ENCODE measurements at regions of chr9 and their contacts with region 1.

Region 1: DNA sequence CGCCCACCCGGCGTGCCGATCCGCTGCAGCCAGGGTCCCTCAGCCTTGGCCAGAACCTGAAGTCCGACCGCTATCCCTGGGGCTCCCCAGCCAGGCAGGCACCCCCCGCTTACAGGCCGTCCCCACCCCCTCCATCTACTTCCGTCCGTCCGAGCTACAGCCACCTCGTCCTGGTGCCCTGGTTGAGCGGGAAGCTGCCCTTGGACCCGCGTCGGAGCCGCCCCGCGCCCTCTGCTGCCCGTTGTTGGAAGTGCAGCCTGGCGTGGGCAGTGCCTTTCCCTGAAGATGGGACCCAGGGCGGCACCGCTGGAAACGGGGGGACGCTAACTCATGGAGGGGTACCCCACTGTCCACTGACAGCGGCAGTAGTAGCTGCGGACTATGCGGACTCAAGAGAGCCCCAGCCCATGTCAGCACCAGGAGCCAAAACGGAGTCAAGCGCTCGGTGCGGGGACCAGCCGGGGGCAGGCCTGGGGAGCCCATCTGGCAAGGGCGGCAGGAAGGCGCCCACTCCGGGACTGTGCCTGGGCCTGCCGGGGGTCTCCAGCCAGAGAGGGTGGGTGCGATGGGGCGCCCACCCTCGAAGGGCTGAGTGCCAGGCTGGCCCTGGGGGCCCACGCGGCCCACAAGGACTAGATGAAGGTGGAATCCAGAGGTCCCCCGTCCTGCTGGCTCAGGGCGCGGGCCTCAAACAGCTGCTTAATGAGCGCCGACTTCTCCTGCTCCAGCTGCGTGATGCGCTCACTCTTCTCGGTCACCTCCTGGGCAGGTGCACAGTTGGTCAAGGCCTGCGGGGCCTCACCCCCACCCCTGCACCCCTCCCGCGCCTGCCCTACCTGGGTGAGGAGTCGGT is 6.1 kb downstream of the SAPCD2 start:
- DNase-seq: peak in 1 of 2 experiments; percentile 72
- H3K4me3 ChIP-seq: no peak overlapping the region
- H3K4me3 Mint-ChIP-seq: no peak overlapping the region
- H3K27ac Mint-ChIP-seq: no peak overlapping the region
- H3K4me1 ChIP-seq: peaks cover 15% of the 10 kb centered on the region
- H3K4me1 Mint-ChIP-seq: peaks cover 10% of the 10 kb centered on the region
- H3K27me3 ChIP-seq: no peaks in the 10 kb centered on the region
- H3K27me3 Mint-ChIP-seq: no peaks in the 10 kb centered on the region
- CTCF ChIP-seq: peak; percentile 90 to 94

Region 2: GRCh38 chr9:136728080-136728547 is 336.1 kb before region 1 on chr9:
- CTCF ChIA-PET with region 1: no interaction called
- POLR2A ChIA-PET with region 1: interaction called, 10 read pairs
- intact Hi-C with region 1: no loop called
- DNase-seq: peak; percentile 88 to 95
- H3K4me3 ChIP-seq: peak overlapping the region; percentile 99
- H3K4me3 Mint-ChIP-seq: peak overlapping the region; percentile 97
- H3K27ac Mint-ChIP-seq: peak overlapping the region; percentile 100
- H3K4me1 ChIP-seq: peaks cover 17% of the 10 kb centered on the region
- H3K4me1 Mint-ChIP-seq: peaks cover 10% of the 10 kb centered on the region
- H3K27me3 ChIP-seq: no peaks in the 10 kb centered on the region
- H3K27me3 Mint-ChIP-seq: no peaks in the 10 kb centered on the region
- CTCF ChIP-seq: peak; percentile 83 to 89

Measured in Caco-2 (cell line).